HepG2 (cell line): ENCODE measurements at regions of chr16 and their contacts with region 1.

Region 1: GRCh38 chr16:67968400-67969253 is at the start of gene SLC12A4:
- DNase-seq: peak; percentile 86
- ATAC-seq: peak; percentile 73
- H3K4me3 ChIP-seq: peak within 1 kb of the TSS; percentile 89 to 91 (median 90)
- H3K27ac ChIP-seq: peak within 1 kb of the TSS; percentile 92
- H3K4me1 ChIP-seq: peaks cover 57% of the 10 kb centered on the region
- H3K27me3 ChIP-seq: no peaks in the 10 kb centered on the region; a peak in 1 of 5 replicates
- CTCF ChIP-seq: peak; percentile 13; the same call in 1 of the 2 replicates
- EP300 ChIP-seq: peak in 1 of 2 experiments; percentile 73; a peak in 1 of 4 replicates
- POLR2A ChIP-seq: peak; percentile 66 to 81
- RAD21 ChIP-seq: peak; percentile 5; the same call in 1 of the 2 replicates
- total RNA-seq, gene SLC12A4: 23.1 and 65.1 TPM in 2 replicates

Region 2: GRCh38 chr16:67954421-67955196 is 14.0 kb before region 1 on chr16:
- CTCF ChIA-PET with region 1: no interaction called
- POLR2A ChIA-PET with region 1: interaction called, 226 read pairs
- in situ Hi-C with region 1: no loop called
- intact Hi-C with region 1: no loop called
- DNase-seq: no peak
- ATAC-seq: peak; percentile 69
- H3K4me3 ChIP-seq: no peak overlapping the region
- H3K27ac ChIP-seq: peak overlapping the region; percentile 18
- H3K4me1 ChIP-seq: peaks cover 17% of the 10 kb centered on the region
- H3K27me3 ChIP-seq: no peaks in the 10 kb centered on the region
- CTCF ChIP-seq: no peak
- EP300 ChIP-seq: no peak
- POLR2A ChIP-seq: no peak
- RAD21 ChIP-seq: no peak

Region 3: DNA sequence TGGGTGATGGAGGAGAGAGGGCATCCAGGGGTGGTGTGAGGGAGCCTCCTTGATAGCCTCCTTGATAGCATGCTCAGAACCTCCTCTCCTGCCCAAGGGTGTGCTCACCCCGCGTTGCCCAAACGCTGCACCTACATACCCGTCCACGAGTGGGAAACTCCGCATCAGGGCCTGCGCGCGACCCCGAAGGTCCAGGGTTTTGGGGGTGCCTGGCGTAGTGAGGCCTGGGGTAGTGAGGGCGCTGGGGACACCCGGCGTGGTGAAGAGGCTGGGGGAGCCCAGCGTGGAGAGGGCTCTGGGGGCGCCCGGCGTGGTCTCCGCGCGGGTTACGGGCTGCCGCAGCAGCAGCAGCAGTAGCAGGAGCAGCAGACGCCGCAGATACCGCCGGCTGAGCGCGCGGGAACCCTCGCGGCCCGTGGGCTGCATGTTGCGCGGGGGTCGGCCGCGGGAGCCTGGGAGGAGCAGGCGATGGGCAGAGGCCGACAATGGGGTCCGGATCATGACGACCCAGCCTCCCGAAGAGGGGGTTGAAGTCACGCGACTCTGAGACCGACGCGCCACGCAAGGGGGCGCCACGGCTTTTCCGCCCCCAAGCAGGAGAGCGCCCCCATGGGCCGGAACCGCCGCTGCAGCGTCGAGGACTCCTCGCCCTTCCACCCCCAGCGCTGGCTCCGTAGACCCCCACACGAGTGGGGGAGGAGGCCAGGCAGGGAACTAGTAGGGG is 11.5 kb after region 1 on chr16 and contains the start of gene DPEP3:
- CTCF ChIA-PET with region 1: no interaction called
- POLR2A ChIA-PET with region 1: interaction called, 17 read pairs
- in situ Hi-C with region 1: no loop called
- intact Hi-C with region 1: no loop called
- DNase-seq: no peak
- ATAC-seq: no peak
- H3K4me3 ChIP-seq: no peak within 1 kb of the TSS
- H3K27ac ChIP-seq: no peak within 1 kb of the TSS
- H3K4me1 ChIP-seq: peaks cover 54% of the 10 kb centered on the region
- H3K27me3 ChIP-seq: peaks cover 5 to 34% of the 10 kb centered on the region in 2 experiments; a peak in 4 of 5 replicates
- CTCF ChIP-seq: no peak
- EP300 ChIP-seq: no peak
- POLR2A ChIP-seq: no peak
- RAD21 ChIP-seq: no peak
- total RNA-seq, gene DPEP3: not detected in 2 replicates

Region 4: DNA sequence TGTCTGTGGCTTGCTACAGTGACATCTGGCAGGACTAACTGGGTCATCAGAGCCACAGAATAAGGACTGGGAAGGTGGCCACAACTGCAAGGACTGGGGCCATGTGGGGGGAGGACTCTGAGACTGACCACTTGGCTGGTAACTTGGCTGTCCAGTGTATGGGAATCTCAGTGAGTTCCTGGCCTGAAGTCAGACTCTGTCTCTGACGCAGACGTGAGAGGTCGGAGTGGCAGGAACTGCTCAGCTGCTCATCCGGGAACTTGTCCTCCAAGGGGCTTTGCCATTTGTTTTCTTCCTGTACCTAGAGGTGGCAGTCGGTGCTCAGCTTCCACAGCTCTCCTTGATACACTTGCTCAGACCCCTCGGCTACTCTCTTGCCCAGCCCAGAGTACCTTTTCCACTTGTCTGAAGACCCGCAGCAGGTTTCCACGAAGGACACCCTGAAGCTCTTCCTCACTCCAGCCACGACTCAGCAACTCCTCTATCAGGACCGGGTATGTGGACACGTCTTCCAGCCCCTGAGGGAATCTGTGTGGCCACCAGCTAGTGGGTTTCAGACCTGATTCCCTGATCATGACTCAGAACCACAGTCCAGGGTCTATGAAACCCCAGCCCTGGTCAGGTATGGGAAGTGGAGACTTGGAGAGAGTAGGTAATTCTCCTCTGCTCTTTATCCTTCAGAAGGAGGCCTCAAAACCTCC is 19.0 kb after region 1 on chr16:
- CTCF ChIA-PET with region 1: no interaction called
- POLR2A ChIA-PET with region 1: interaction called, 20 read pairs
- in situ Hi-C with region 1: no loop called
- intact Hi-C with region 1: no loop called
- DNase-seq: peak; percentile 57
- ATAC-seq: peak; percentile 66
- H3K4me3 ChIP-seq: peak overlapping the region; percentile 24 to 61 (median 30)
- H3K27ac ChIP-seq: no peak overlapping the region
- H3K4me1 ChIP-seq: peaks cover 60% of the 10 kb centered on the region
- H3K27me3 ChIP-seq: peaks cover 2 to 18% of the 10 kb centered on the region in 2 experiments
- CTCF ChIP-seq: peak; percentile 41
- EP300 ChIP-seq: no peak
- POLR2A ChIP-seq: peak; percentile 40 to 48; a peak in 2 of 4 replicates
- RAD21 ChIP-seq: no peak

Region 5: GRCh38 chr16:68009157-68009735 is 40.6 kb after region 1 on chr16:
- CTCF ChIA-PET with region 1: no interaction called
- POLR2A ChIA-PET with region 1: no interaction called
- in situ Hi-C with region 1: no loop called
- intact Hi-C with region 1: no loop called
- DNase-seq: no peak
- ATAC-seq: no peak
- H3K4me3 ChIP-seq: no peak overlapping the region
- H3K27ac ChIP-seq: no peak overlapping the region
- H3K4me1 ChIP-seq: peaks cover 19% of the 10 kb centered on the region
- H3K27me3 ChIP-seq: peaks cover 0 to 19% of the 10 kb centered on the region in 2 experiments; a peak in 3 of 5 replicates
- CTCF ChIP-seq: no peak
- EP300 ChIP-seq: no peak
- POLR2A ChIP-seq: no peak
- RAD21 ChIP-seq: no peak

Region 6: DNA sequence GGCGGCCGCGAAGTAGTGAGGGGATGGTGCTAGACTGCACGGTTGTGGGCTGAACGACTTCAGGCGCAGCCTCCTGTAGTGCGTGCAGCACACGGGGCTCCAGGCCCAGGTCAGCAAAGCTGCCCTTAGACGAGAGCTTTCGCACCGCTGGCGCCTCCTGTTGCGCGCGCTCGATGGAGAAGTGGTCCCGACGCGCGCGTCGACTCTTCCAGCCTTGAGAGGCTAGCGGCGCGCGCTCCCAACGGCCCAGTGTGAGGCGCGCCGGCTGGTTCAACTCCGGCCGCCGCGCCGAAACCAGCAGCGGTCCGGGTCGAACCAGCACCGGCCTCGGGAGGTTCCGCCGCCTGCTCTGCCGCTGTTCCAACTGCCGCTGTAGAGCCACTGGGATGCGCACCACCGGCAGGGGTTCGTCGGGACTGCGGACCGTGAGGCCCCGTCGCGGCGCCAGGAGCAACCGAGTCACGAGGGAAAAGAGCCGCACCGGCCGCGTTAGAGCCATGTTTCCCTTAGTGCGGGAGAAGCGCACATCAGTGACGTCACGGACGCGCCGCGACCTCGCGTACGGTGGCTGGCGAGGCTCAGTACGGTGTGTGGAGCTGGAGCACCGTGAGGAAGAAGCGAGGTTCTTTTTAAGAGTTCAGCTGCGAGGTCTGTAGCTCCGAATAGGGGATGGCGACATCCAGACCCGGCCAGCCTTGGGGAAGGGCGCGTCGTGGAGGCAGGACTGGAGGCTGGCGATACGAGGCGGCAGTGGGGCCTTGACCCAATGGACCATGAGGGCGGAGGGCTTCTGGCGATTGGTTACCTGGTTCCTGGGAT is 54.3 kb after region 1 on chr16 and contains the starts of genes DDX28 and DUS2:
- CTCF ChIA-PET with region 1: no interaction called
- POLR2A ChIA-PET with region 1: interaction called, 16 read pairs
- in situ Hi-C with region 1: no loop called
- intact Hi-C with region 1: no loop called
- DNase-seq: peak; percentile 88
- ATAC-seq: peak; percentile 88
- H3K4me3 ChIP-seq: peak within 1 kb of the TSS; percentile 92 to 99 (median 92)
- H3K27ac ChIP-seq: peak within 1 kb of the TSS; percentile 83
- H3K4me1 ChIP-seq: peaks cover 24% of the 10 kb centered on the region
- H3K27me3 ChIP-seq: no peaks in the 10 kb centered on the region; a peak in 1 of 5 replicates
- CTCF ChIP-seq: peak; percentile 34; the same call in 1 of the 2 replicates
- EP300 ChIP-seq: peak; percentile 37 to 77; a peak in 2 of 4 replicates
- POLR2A ChIP-seq: peak; percentile 88 to 92
- RAD21 ChIP-seq: peak; percentile 38; the same call in 1 of the 2 replicates
- total RNA-seq, gene DDX28: 16.4 and 18.4 TPM in 2 replicates
- total RNA-seq, gene DUS2: 25.1 and 25.9 TPM in 2 replicates